Heart right ventricle (tissue), 16 donors: ENCODE measurements at regions of chr13 and their contacts with region 1.

Region 1: GRCh38 chr13:103517066-103517767 is 451.0 kb upstream of the SLC10A2 start:
- DNase-seq: no peak
- ATAC-seq: no peak
- H3K4me3 ChIP-seq: no peak overlapping the region
- H3K27ac ChIP-seq: no peak overlapping the region
- H3K4me1 ChIP-seq: no peaks in the 10 kb centered on the region
- H3K27me3 ChIP-seq: no peaks in the 10 kb centered on the region
- CTCF ChIP-seq: no peak

Region 2: DNA sequence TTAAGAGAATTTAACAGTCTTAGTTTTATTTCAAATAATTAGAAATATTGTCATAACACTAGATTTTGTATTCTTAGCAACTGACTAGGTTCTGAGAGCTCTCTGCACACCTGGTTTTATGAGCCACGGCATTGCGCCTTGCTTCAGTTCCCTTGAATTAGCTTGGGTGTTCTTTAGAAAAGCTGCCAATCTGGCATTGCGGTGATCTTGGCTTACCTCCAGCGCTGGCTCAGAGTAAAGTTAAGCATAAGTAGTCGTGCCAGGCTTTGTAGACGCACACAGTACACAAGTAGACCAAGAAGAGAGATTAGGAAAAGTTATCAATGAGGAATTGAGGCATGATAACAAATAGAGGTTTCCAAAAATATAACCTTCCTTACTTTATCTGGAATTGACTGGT is 874.7 kb before region 1 on chr13:
- intact Hi-C with region 1: no loop called
- DNase-seq: peak; percentile 54 to 57
- ATAC-seq: peak in 6 of 8 donors; percentile 75 to 91 (median 88)
- H3K4me3 ChIP-seq: no peak overlapping the region
- H3K27ac ChIP-seq: peak overlapping the region in 1 of 10 donors; percentile 11
- H3K4me1 ChIP-seq: peaks cover 0 to 27% (median 10%) of the 10 kb centered on the region in 9 donors
- H3K27me3 ChIP-seq: no peaks in the 10 kb centered on the region
- CTCF ChIP-seq: no peak

Region 3: DNA sequence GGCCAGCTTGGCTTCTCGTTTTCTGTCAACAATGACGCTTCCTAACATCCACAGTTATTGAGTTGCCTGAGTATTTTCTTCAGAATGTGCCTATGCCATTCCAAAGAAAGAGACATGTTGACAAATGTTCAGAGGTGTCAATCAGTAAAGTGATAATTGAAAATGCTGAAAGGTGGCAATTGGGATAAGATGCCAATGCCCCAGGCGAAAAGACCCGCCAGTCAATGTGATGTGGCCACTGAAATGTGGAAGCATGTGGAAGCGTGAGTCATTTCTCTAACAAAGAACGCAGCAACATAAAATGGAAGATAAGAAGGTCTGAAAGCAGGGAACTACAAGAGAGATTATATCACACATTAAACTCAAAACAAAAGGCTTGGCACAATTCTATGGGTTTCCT is 431.2 kb after region 1 on chr13:
- intact Hi-C with region 1: loop called in 1 of 10 experiments (anchors 5 kb)
- DNase-seq: no peak
- ATAC-seq: no peak
- H3K4me3 ChIP-seq: no peak overlapping the region
- H3K27ac ChIP-seq: no peak overlapping the region
- H3K4me1 ChIP-seq: no peaks in the 10 kb centered on the region
- H3K27me3 ChIP-seq: no peaks in the 10 kb centered on the region
- CTCF ChIP-seq: no peak